ENCODE measurements at regions of chr13 and their contacts with region 1.

Region 1: GRCh38 chr13:43905435-43906031 is 25.8 kb downstream of the LACC1 start:
- DNase-seq: no peak
- ATAC-seq: peak; percentile 53 to 70

Region 2: GRCh38 chr13:44068737-44069136 is 163.2 kb after region 1 on chr13:
- intact Hi-C with region 1: no loop called
- DNase-seq: no peak
- ATAC-seq: peak in 1 of 2 donors; percentile 78

Region 3: GRCh38 chr13:44470638-44471562 is 565.4 kb after region 1 on chr13:
- intact Hi-C with region 1: loop called in 1 of 2 experiments (anchors 2 kb)
- DNase-seq: no peak
- ATAC-seq: peak in 1 of 2 donors; percentile 18

Region 4: DNA sequence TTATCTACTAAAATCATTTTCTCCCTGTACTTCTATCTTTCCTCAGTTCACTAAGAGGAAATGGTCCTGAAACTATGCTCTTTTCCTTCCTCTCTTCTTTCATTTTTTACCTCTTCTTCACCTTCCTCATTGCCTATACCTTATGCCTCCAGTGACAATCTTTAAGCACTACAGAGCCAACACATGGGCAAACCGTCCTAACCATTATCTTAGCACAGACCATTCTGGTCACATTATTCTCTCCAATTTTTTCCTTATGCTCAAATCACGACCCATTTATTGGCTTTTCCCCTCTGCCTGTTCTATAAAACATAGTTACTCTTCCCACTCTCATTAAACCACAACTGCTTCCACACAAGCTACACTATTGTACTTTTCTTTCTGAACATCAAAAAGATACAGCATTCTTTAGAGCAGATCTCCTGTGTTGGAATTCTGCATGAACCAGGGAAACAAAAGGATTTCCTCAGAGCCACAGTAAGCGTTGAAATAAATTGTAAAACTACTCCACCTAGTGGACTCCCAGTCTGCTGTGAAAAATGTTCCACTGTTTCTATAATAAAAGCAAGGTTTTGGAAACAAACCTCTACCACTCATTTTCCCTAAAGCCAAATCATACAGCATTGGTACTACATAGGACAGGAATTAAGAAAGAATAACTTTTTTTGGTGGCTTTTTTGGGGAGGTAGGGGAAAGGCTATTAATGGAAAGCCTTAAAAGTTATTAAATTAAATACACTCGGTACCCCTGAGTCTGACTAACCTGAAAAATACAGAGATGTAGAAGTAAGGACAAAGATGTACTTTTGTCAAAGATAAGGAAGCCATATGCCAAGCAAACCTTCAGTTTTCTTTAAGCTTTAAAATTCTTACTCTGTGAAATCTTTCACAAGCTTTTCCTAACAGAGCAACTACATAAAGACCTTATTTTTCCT is 1064.3 kb after region 1 on chr13:
- intact Hi-C with region 1: loop called (anchors 2 to 5 kb)
- DNase-seq: no peak
- ATAC-seq: peak; percentile 55 to 74